Activated CD4-positive, alpha-beta memory T cell treated with anti-CD3 and anti-CD28 coated beads for 36 hours (primary cell): ENCODE measurements at regions of chr18 and their contacts with region 1.

Region 1: GRCh38 chr18:712401-713134 is at the start of gene ENOSF1:
- DNase-seq: peak; percentile 94
- H3K4me3 Mint-ChIP-seq: peak within 1 kb of the TSS; percentile 82
- H3K27ac Mint-ChIP-seq: peak within 1 kb of the TSS; percentile 88
- H3K4me1 Mint-ChIP-seq: peaks cover 54% of the 10 kb centered on the region
- H3K27me3 Mint-ChIP-seq: no peaks in the 10 kb centered on the region
- total RNA-seq, gene ENOSF1: 59.1 to 61.2 TPM

Region 2: GRCh38 chr18:596288-596881 is 116.2 kb before region 1 on chr18:
- CTCF ChIA-PET with region 1: no interaction called
- POLR2A ChIA-PET with region 1: no interaction called
- intact Hi-C with region 1: loop called (anchors 10 kb)
- DNase-seq: no peak
- H3K4me3 Mint-ChIP-seq: no peak overlapping the region
- H3K27ac Mint-ChIP-seq: no peak overlapping the region
- H3K4me1 Mint-ChIP-seq: peaks cover 5% of the 10 kb centered on the region
- H3K27me3 Mint-ChIP-seq: peaks cover 18% of the 10 kb centered on the region

Region 3: DNA sequence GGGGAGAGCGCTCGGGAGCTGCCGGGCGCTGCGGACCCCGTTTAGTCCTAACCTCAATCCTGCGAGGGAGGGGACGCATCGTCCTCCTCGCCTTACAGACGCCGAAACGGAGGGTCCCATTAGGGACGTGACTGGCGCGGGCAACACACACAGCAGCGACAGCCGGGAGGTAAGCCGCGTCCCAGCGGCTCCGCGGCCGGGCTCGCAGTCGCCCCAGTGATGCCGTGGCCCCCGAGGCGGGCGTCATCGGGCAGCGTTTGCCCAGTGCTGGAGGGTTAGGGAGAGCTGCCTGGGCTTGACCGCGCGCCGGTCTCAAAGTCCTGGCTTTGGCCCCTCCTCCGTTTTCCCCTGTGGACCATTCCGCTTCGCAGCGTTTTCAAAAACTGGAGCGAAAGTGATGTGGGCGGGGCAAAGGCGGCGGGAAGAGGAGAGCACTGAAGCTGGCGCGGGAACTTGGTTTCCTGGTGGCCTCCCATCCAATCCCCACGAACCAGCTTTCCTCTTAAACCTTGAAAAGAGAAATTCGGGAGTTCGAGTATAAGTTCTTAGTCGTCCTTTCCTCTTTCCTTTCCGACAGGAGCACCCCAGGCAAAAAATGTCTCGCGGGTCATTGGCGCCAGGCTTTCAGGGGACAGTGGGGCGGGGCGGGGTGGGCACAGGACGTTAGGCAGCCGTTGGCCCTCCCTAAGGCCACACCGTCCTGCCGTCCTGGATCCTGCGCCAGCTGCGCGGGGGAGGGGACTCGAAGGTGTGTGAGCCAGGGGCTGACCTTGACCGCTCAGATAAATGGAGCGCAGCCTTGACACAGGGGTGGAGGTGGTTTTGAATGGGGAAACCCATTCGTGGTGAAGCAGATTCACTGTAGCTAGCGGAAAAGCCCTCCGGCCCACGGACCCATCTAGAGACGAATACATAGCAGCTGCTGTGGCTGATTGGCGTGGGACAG is 54.3 kb before region 1 on chr18:
- CTCF ChIA-PET with region 1: interaction called, 3 read pairs
- POLR2A ChIA-PET with region 1: interaction called, 8 read pairs
- intact Hi-C with region 1: loop called (anchors 1 kb)
- DNase-seq: peak; percentile 85
- H3K4me3 Mint-ChIP-seq: peak overlapping the region; percentile 92
- H3K27ac Mint-ChIP-seq: peak overlapping the region; percentile 84
- H3K4me1 Mint-ChIP-seq: peaks cover 12% of the 10 kb centered on the region
- H3K27me3 Mint-ChIP-seq: peaks cover 25% of the 10 kb centered on the region

Region 4: GRCh38 chr18:741931-742512 is 29.5 kb after region 1 on chr18:
- CTCF ChIA-PET with region 1: interaction called, 11 read pairs
- POLR2A ChIA-PET with region 1: no interaction called
- intact Hi-C with region 1: no loop called
- DNase-seq: no peak
- H3K4me3 Mint-ChIP-seq: no peak overlapping the region
- H3K27ac Mint-ChIP-seq: no peak overlapping the region
- H3K4me1 Mint-ChIP-seq: no peaks in the 10 kb centered on the region
- H3K27me3 Mint-ChIP-seq: no peaks in the 10 kb centered on the region

Region 5: GRCh38 chr18:839224-840022 is 126.9 kb after region 1 on chr18:
- CTCF ChIA-PET with region 1: interaction called, 25 read pairs
- POLR2A ChIA-PET with region 1: interaction called, 5 read pairs
- intact Hi-C with region 1: loop called (anchors 1 kb)
- DNase-seq: peak; percentile 91
- H3K4me3 Mint-ChIP-seq: no peak overlapping the region
- H3K27ac Mint-ChIP-seq: no peak overlapping the region
- H3K4me1 Mint-ChIP-seq: no peaks in the 10 kb centered on the region
- H3K27me3 Mint-ChIP-seq: no peaks in the 10 kb centered on the region